Gastrocnemius medialis (tissue), 4 donors: ENCODE measurements at regions of chr18 and their contacts with region 1.

Region 1: GRCh38 chr18:1438458-1438910 is 533.8 kb downstream of the ADCYAP1 start:
- DNase-seq: no peak
- ATAC-seq: no peak
- H3K4me3 ChIP-seq: no peak overlapping the region
- H3K27ac ChIP-seq: no peak overlapping the region
- H3K4me1 ChIP-seq: no peaks in the 10 kb centered on the region
- H3K27me3 ChIP-seq: no peaks in the 10 kb centered on the region
- CTCF ChIP-seq: no peak
- POLR2A ChIP-seq: no peak

Region 2: DNA sequence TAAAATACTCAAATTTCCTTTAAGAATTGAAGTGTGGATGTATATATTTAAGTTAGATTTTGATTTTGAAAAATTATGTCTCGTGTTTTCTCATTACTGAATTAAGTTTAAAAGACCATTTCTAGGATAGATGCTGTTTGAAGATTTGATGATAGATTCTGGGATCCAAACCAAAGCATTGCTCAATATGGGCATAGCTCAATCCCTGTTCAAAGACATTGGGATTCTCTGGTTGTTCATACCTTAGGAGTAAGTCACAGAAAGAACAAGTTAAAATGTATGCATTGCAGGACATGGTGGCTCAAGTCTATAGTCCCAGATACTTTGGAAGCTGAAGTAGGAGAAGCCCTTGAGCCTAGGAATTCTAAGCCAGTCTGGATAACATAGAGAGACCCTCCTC is 88.5 kb after region 1 on chr18:
- in situ Hi-C with region 1: loop called in 1 of 4 experiments (anchors 25 kb)
- intact Hi-C with region 1: no loop called
- DNase-seq: no peak
- ATAC-seq: no peak
- H3K4me3 ChIP-seq: no peak overlapping the region
- H3K27ac ChIP-seq: no peak overlapping the region
- H3K4me1 ChIP-seq: no peaks in the 10 kb centered on the region
- H3K27me3 ChIP-seq: no peaks in the 10 kb centered on the region
- CTCF ChIP-seq: no peak
- POLR2A ChIP-seq: no peak